A549 (cell line): ENCODE measurements at regions of chr3 and their contacts with region 1.

Region 1: DNA sequence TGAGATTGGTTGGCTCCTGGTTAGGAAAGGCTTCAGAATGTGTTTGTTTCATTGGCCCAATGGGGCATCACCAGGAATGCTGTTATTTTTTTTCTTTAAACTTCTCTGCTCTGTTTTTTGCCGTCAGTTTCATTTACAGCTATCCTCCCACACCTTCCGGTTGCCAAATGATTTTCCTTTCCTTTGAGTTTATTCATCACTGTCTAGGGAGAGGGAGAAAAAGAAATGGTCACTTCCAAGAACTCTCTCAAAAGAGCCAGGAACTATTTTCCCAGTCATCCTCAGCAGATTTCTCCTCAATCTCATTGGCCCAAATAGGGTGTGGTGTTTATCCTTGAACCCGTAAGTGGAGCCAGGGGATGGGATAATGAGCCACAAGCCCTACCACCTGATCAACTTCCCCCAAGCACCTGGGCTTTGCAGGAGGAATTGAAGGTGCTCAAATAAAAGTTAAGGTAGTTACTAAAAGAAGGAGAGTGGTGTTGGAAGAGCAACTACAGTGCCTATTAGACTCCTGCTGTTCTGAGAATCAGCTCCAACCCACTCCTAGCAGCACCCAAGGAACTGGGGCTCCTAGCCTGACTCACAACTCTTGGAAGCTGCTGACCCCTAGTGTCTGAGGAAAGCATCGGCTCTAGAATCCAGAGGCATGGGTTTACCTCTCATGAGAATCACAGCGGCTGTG is 183.8 kb upstream of the IL12A start:
- DNase-seq: peak; percentile 77 to 88
- ATAC-seq: peak; percentile 96 to 99
- H3K4me3 ChIP-seq: no peak overlapping the region
- H3K27ac ChIP-seq: peak overlapping the region in 1 of 2 experiments; percentile 57; a peak in 1 of 6 replicates
- H3K4me1 ChIP-seq: peaks cover 14% of the 10 kb centered on the region
- CTCF ChIP-seq: peak; percentile 96
- EP300 ChIP-seq: no peak
- POLR2A ChIP-seq: no peak
- RAD21 ChIP-seq: peak; percentile 98 to 99

Region 2: GRCh38 chr3:159322322-159322939 is 482.4 kb before region 1 on chr3:
- CTCF ChIA-PET with region 1: interaction called, 14 read pairs
- POLR2A ChIA-PET with region 1: no interaction called
- DNase-seq: peak; percentile 40 to 44
- ATAC-seq: peak; percentile 43 to 85; a peak in 4 of 6 replicates
- H3K4me3 ChIP-seq: no peak overlapping the region
- H3K27ac ChIP-seq: no peak overlapping the region
- H3K4me1 ChIP-seq: no peaks in the 10 kb centered on the region
- CTCF ChIP-seq: peak; percentile 57
- EP300 ChIP-seq: no peak
- POLR2A ChIP-seq: no peak
- RAD21 ChIP-seq: peak; percentile 26 to 59; a peak in 4 of 5 replicates

Region 3: DNA sequence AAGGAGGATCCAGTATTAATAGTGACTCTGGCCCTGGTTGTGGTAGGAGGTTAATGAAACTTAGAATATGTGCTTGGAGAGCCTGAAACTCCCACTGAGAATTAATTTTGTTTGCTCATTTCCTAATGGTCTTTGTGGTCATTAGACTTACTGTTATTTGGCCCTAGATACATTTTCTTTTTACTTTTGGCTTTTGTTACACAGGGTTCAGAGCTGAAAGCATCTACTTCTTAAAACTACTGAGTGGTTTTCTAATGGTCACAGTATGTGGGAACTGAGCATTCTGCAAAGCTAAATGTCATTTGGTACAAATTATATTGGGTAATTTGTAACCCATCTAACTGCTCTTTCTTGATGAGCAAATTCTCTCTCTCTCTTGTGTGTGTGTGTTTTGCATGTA is 249.7 kb before region 1 on chr3:
- CTCF ChIA-PET with region 1: no interaction called
- POLR2A ChIA-PET with region 1: no interaction called
- DNase-seq: no peak
- ATAC-seq: no peak
- H3K4me3 ChIP-seq: no peak overlapping the region
- H3K27ac ChIP-seq: no peak overlapping the region
- H3K4me1 ChIP-seq: no peaks in the 10 kb centered on the region
- CTCF ChIP-seq: no peak
- EP300 ChIP-seq: no peak
- POLR2A ChIP-seq: no peak
- RAD21 ChIP-seq: no peak

Region 4: GRCh38 chr3:159624616-159625015 is 180.3 kb before region 1 on chr3:
- CTCF ChIA-PET with region 1: interaction called, 12 read pairs
- POLR2A ChIA-PET with region 1: no interaction called
- DNase-seq: no peak
- ATAC-seq: no peak
- H3K4me3 ChIP-seq: no peak overlapping the region
- H3K27ac ChIP-seq: no peak overlapping the region
- H3K4me1 ChIP-seq: peaks cover 46% of the 10 kb centered on the region
- CTCF ChIP-seq: no peak
- EP300 ChIP-seq: no peak
- POLR2A ChIP-seq: no peak
- RAD21 ChIP-seq: no peak

Region 5: GRCh38 chr3:159763602-159764489 is 41.0 kb before region 1 on chr3:
- CTCF ChIA-PET with region 1: interaction called, 61 read pairs
- POLR2A ChIA-PET with region 1: interaction called, 5 read pairs
- DNase-seq: peak; percentile 81 to 88
- ATAC-seq: peak; percentile 57 to 71
- H3K4me3 ChIP-seq: peak overlapping the region; percentile 94
- H3K27ac ChIP-seq: peak overlapping the region; percentile 95 to 96
- H3K4me1 ChIP-seq: peaks cover 41% of the 10 kb centered on the region
- CTCF ChIP-seq: peak; percentile 22; the same call in 2 of the 3 replicates
- EP300 ChIP-seq: no peak
- POLR2A ChIP-seq: peak; percentile 81
- RAD21 ChIP-seq: peak; percentile 9 to 54; a peak in 2 of 5 replicates

Region 6: DNA sequence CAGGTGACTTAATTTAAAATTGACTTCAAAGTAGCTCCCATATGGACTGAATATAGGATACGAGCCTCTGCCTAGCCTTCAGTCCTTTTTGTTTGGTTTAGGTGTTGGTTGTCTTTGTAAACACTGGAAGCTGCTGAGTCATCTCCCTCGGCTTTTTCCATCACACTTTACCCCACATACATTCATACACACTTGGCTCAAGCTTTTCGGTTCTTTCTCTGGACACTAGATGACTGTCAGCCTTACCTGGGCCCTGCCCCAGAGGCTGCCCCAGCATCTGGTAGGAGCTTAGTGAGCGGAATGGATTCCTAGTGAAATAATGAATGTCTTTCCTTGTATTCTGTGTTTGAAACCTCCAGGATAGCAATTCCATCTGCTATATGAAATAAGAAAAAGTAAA is 17.7 kb before region 1 on chr3:
- CTCF ChIA-PET with region 1: interaction called, 79 read pairs
- POLR2A ChIA-PET with region 1: interaction called, 3 read pairs
- DNase-seq: peak; percentile 65 to 90
- ATAC-seq: peak; percentile 73 to 80
- H3K4me3 ChIP-seq: peak overlapping the region; percentile 13; the same call in 2 of the 3 replicates
- H3K27ac ChIP-seq: peak overlapping the region; percentile 75 to 84
- H3K4me1 ChIP-seq: peaks cover 99% of the 10 kb centered on the region
- CTCF ChIP-seq: no peak
- EP300 ChIP-seq: 0 out of 5 replicates have a peak, but pooled peaks of 1 of the 2 experiments have one; percentile 31
- POLR2A ChIP-seq: no peak
- RAD21 ChIP-seq: no peak

Region 7: GRCh38 chr3:159902546-159903314 is 97.9 kb after region 1 on chr3:
- CTCF ChIA-PET with region 1: no interaction called
- POLR2A ChIA-PET with region 1: no interaction called
- DNase-seq: no peak
- ATAC-seq: peak in 1 of 2 experiments; percentile 32; a peak in 2 of 6 replicates
- H3K4me3 ChIP-seq: no peak overlapping the region
- H3K27ac ChIP-seq: no peak overlapping the region
- H3K4me1 ChIP-seq: no peaks in the 10 kb centered on the region
- CTCF ChIP-seq: no peak
- EP300 ChIP-seq: no peak
- POLR2A ChIP-seq: no peak
- RAD21 ChIP-seq: no peak

Region 8: DNA sequence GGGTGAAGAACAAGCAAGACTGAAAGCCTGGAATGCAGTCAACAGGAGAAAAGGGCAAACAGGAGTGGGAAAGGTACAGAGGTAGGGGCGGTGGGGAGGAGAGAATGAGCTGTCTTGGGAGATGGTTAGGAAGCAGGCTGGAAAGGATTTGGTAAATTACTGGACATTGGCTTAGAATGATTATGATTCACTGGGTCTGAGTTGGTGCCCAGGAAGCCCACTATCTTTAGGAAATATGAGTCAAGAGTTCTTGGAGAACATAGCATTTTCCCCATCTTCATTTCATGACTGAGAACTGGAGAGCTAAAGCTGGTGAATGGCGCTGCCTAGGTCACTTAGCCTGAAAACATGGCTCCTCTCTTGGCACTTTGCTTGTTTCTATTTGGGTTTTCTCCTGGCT is 345.7 kb after region 1 on chr3:
- CTCF ChIA-PET with region 1: no interaction called
- POLR2A ChIA-PET with region 1: no interaction called
- DNase-seq: no peak
- ATAC-seq: no peak
- H3K4me3 ChIP-seq: no peak overlapping the region
- H3K27ac ChIP-seq: peak overlapping the region in 1 of 2 experiments; percentile 43; a peak in 2 of 6 replicates
- H3K4me1 ChIP-seq: no peaks in the 10 kb centered on the region
- CTCF ChIP-seq: no peak
- EP300 ChIP-seq: no peak
- POLR2A ChIP-seq: no peak
- RAD21 ChIP-seq: no peak